Activated CD4-positive, alpha-beta memory T cell treated with anti-CD3 and anti-CD28 coated beads for 36 hours (primary cell): ENCODE measurements at regions of chr9 and their contacts with region 1.

Region 1: GRCh38 chr9:99819856-99820684 is 1.6 kb upstream of the NR4A3 start:
- DNase-seq: peak; percentile 92
- H3K4me3 Mint-ChIP-seq: peak overlapping the region; percentile 86
- H3K27ac Mint-ChIP-seq: peak overlapping the region; percentile 87
- H3K4me1 Mint-ChIP-seq: peaks cover 54% of the 10 kb centered on the region
- H3K27me3 Mint-ChIP-seq: peaks cover 17% of the 10 kb centered on the region

Region 2: DNA sequence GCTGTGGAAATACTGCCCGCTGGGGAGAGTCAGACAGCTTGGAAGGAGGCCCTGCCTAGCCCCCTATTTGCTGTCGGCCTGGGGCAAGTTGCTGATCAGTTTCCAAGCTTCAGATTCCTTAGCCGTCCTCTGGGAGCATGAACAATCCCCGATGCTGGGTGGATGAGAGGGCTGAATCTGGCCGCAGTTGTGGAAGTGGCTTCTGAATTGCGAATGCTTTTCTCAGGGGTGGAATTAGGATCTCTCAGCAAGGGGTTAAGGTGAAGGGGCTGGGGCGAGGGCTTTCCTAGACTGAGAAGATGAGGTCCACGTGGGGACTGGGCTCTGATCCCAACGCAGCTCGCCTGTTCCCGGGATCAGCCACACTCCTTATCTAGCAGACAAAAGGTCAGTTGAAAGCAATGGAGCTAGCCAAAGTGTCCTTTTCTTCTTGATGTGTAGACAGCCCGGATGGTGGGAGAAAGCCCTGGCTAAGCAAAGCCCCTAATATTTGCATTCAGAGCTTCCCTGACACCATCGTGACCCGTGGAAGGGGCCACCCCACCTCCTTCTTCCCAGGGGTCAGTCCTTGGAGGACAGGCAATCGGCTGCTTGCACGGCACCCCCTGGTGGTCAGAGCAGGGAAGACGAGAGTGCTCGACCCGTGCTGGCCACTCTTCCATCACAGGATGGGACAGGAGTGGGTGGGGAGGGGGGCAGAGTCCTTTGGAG is 821.5 kb before region 1 on chr9:
- CTCF ChIA-PET with region 1: no interaction called
- POLR2A ChIA-PET with region 1: no interaction called
- intact Hi-C with region 1: no loop called
- DNase-seq: peak; percentile 73
- H3K4me3 Mint-ChIP-seq: no peak overlapping the region
- H3K27ac Mint-ChIP-seq: no peak overlapping the region
- H3K4me1 Mint-ChIP-seq: peaks cover 23% of the 10 kb centered on the region
- H3K27me3 Mint-ChIP-seq: peaks cover 7% of the 10 kb centered on the region

Region 3: GRCh38 chr9:99104459-99105151 is 715.5 kb before region 1 on chr9 and contains the start of gene TGFBR1:
- CTCF ChIA-PET with region 1: interaction called, 3 read pairs
- POLR2A ChIA-PET with region 1: no interaction called
- intact Hi-C with region 1: loop called (anchors 1 kb)
- DNase-seq: peak; percentile 94
- H3K4me3 Mint-ChIP-seq: peak within 1 kb of the TSS; percentile 80
- H3K27ac Mint-ChIP-seq: peak within 1 kb of the TSS; percentile 67
- H3K4me1 Mint-ChIP-seq: peaks cover 41% of the 10 kb centered on the region
- H3K27me3 Mint-ChIP-seq: no peaks in the 10 kb centered on the region
- total RNA-seq, gene TGFBR1: 25.4 to 26.3 TPM

Region 4: DNA sequence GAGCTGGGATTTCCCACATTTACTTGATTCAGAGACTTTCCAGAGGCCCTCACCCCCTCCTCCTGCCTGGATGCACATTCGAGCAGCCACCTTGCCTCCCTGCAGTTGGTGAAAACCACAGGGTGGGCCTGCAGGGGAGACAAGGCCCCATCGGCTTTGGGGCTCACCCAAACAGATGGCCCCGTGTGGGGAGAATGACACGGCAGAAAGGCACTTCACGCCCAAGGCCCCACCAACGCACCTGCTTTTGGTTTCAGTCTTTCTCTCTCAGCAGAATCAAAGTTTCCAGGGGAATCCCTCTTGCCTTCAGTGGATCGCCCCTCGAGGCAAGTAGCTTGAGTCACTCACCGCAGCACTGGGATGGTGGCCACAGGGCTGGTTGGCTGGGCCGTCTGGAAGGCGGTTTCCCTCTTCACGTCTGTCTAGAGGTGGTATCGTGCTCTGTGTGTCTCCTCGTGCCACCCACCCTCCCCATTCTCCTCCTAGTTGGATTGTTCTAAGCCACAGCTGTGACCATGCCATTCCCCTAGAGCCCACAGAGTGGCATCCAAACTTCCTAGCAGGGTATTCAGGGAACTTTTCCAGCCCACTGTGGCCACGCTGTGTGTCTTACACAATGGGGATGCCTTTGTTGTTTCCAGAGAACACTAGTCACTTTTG is 566.2 kb before region 1 on chr9:
- CTCF ChIA-PET with region 1: no interaction called
- POLR2A ChIA-PET with region 1: no interaction called
- intact Hi-C with region 1: loop called (anchors 1 kb)
- DNase-seq: peak; percentile 95
- H3K4me3 Mint-ChIP-seq: peak overlapping the region; percentile 46
- H3K27ac Mint-ChIP-seq: peak overlapping the region; percentile 90
- H3K4me1 Mint-ChIP-seq: peaks cover 43% of the 10 kb centered on the region
- H3K27me3 Mint-ChIP-seq: peaks cover 8% of the 10 kb centered on the region

Region 5: DNA sequence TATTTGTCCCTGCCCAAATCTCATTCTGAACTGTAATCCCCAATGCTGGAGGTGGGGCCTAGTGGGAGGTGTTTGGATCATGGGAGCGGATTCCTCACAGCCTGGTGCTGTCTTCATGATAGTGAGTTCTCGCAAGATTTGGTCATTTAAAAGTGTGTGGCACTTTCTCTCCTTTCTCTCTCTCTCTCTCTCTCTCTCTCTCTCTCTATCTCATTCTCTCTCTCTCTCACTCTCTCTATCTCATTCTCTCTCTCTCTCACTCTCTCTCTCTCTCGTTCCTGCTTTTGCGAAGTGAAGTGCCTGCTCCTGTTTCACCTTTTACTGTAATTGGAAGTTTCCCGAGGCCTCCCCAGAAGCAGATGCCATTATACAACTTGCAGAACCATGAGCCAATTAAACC is 205.7 kb before region 1 on chr9:
- CTCF ChIA-PET with region 1: no interaction called
- POLR2A ChIA-PET with region 1: no interaction called
- intact Hi-C with region 1: no loop called
- DNase-seq: no peak
- H3K4me3 Mint-ChIP-seq: no peak overlapping the region
- H3K27ac Mint-ChIP-seq: no peak overlapping the region
- H3K4me1 Mint-ChIP-seq: no peaks in the 10 kb centered on the region
- H3K27me3 Mint-ChIP-seq: peaks cover 6% of the 10 kb centered on the region

Region 6: GRCh38 chr9:99868845-99869244 is 48.8 kb after region 1 on chr9:
- CTCF ChIA-PET with region 1: interaction called, 4 read pairs
- POLR2A ChIA-PET with region 1: interaction called, 3 read pairs
- intact Hi-C with region 1: loop called (anchors 1 kb)
- DNase-seq: no peak
- H3K4me3 Mint-ChIP-seq: no peak overlapping the region
- H3K27ac Mint-ChIP-seq: no peak overlapping the region
- H3K4me1 Mint-ChIP-seq: peaks cover 21% of the 10 kb centered on the region
- H3K27me3 Mint-ChIP-seq: no peaks in the 10 kb centered on the region

Region 7: DNA sequence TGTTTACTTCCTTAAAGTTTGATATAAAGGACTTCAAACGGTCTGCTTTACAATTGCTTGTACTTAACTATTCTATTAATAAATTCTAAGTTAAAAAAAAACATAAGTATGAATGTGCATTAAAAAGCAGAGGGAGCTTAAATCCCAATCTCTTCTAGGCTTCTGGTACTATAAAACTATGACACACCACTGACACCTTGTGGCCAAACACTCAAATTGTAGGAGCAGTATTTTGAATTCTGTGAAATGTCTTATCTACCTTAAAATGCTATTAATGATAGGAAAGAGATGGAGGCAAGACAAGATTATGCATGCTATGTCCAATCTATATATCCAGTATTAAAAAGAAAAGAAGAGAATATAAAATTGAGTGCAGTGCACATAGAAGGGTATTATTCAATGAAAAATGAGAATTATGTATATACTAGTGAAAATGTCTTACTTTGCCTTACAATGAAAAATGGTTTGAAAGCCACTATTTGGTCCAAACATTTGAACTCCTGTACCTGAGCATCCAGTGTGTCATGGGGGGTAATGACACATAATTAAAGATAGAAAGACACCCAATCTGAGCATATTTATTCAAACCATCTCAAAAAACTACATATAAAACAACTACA is 191.1 kb after region 1 on chr9:
- CTCF ChIA-PET with region 1: interaction called, 14 read pairs
- POLR2A ChIA-PET with region 1: no interaction called
- intact Hi-C with region 1: loop called (anchors 1 kb)
- DNase-seq: peak; percentile 20
- H3K4me3 Mint-ChIP-seq: no peak overlapping the region
- H3K27ac Mint-ChIP-seq: no peak overlapping the region
- H3K4me1 Mint-ChIP-seq: no peaks in the 10 kb centered on the region
- H3K27me3 Mint-ChIP-seq: no peaks in the 10 kb centered on the region

Region 8: GRCh38 chr9:100216178-100216787 is 396.2 kb after region 1 on chr9:
- CTCF ChIA-PET with region 1: no interaction called
- POLR2A ChIA-PET with region 1: interaction called, 6 read pairs
- intact Hi-C with region 1: loop called (anchors 5 kb)
- DNase-seq: peak; percentile 76
- H3K4me3 Mint-ChIP-seq: no peak overlapping the region
- H3K27ac Mint-ChIP-seq: no peak overlapping the region
- H3K4me1 Mint-ChIP-seq: peaks cover 2% of the 10 kb centered on the region
- H3K27me3 Mint-ChIP-seq: no peaks in the 10 kb centered on the region

Region 9: GRCh38 chr9:100426530-100427428 is 606.7 kb after region 1 on chr9 and contains the start of gene MSANTD3:
- CTCF ChIA-PET with region 1: no interaction called
- POLR2A ChIA-PET with region 1: no interaction called
- intact Hi-C with region 1: loop called (anchors 10 kb)
- DNase-seq: peak; percentile 67
- H3K4me3 Mint-ChIP-seq: peak within 1 kb of the TSS; percentile 79
- H3K27ac Mint-ChIP-seq: peak within 1 kb of the TSS; percentile 82
- H3K4me1 Mint-ChIP-seq: peaks cover 40% of the 10 kb centered on the region
- H3K27me3 Mint-ChIP-seq: peaks cover 1% of the 10 kb centered on the region
- total RNA-seq, gene MSANTD3: 16.3 to 18.3 TPM